ENCODE measurements at regions of chr5 and their contacts with region 1.

Region 1: GRCh38 chr5:122192497-122193496 is 63.5 kb downstream of the ZNF474 start:
- DNase-seq: no peak
- H3K4me3 ChIP-seq: no peak overlapping the region
- H3K27ac ChIP-seq: no peak overlapping the region
- H3K4me1 ChIP-seq: no peaks in the 10 kb centered on the region
- H3K27me3 ChIP-seq: no peaks in the 10 kb centered on the region
- CTCF ChIP-seq: peak; percentile 8 to 65 (median 40)
- POLR2A ChIP-seq: no peak

Region 2: DNA sequence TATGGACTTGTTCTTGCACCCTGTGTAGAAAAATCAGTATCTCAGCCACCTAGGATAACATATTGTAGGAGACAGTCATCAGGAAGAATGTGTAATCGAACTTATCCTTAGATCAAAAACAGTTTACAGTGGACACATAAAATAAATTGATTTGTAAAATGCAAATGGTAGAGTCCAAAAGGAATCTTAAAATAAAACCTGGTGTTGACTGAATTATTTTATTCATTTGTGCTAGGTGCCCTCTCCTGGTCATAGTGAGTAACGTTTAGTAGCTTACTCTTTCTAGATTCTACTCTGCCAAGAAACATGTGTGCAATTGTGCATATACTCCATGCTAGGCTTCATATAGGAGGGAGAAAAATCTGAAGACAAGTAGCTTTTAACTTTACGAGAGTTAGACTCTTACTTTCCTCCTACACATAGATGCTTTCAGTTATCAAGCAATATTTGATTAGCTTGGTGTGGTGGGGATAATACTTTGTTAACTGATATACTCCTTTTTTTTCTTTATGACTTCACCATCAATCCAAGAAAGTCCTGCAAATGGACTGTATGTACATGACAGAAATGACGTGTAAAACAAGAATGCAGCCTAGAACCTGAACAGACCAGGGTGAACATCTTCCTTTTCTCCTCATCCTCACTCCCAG is 91.0 kb before region 1 on chr5:
- intact Hi-C with region 1: no loop called
- DNase-seq: no peak
- H3K4me3 ChIP-seq: no peak overlapping the region
- H3K27ac ChIP-seq: no peak overlapping the region
- H3K4me1 ChIP-seq: no peaks in the 10 kb centered on the region
- H3K27me3 ChIP-seq: no peaks in the 10 kb centered on the region
- CTCF ChIP-seq: peak in 1 of 3 experiments; percentile 59
- POLR2A ChIP-seq: no peak

Region 3: GRCh38 chr5:122415030-122415800 is 222.4 kb after region 1 on chr5:
- intact Hi-C with region 1: loop called (anchors 5 kb)
- DNase-seq: no peak
- H3K4me3 ChIP-seq: no peak overlapping the region
- H3K27ac ChIP-seq: no peak overlapping the region
- H3K4me1 ChIP-seq: peaks cover 4% of the 10 kb centered on the region
- H3K27me3 ChIP-seq: no peaks in the 10 kb centered on the region
- CTCF ChIP-seq: peak; percentile 5 to 54 (median 41)
- POLR2A ChIP-seq: no peak

Region 4: GRCh38 chr5:124080256-124080655 is 1887.5 kb after region 1 on chr5:
- intact Hi-C with region 1: no loop called
- DNase-seq: no peak
- H3K4me3 ChIP-seq: no peak overlapping the region
- H3K27ac ChIP-seq: no peak overlapping the region
- H3K4me1 ChIP-seq: no peaks in the 10 kb centered on the region
- H3K27me3 ChIP-seq: no peaks in the 10 kb centered on the region
- CTCF ChIP-seq: no peak
- POLR2A ChIP-seq: no peak

Measured in vagina (tissue), 2 donors.